Naive thymus-derived CD4-positive, alpha-beta T cell (primary cell): ENCODE measurements at regions of chr3 and their contacts with region 1.

Region 1: DNA sequence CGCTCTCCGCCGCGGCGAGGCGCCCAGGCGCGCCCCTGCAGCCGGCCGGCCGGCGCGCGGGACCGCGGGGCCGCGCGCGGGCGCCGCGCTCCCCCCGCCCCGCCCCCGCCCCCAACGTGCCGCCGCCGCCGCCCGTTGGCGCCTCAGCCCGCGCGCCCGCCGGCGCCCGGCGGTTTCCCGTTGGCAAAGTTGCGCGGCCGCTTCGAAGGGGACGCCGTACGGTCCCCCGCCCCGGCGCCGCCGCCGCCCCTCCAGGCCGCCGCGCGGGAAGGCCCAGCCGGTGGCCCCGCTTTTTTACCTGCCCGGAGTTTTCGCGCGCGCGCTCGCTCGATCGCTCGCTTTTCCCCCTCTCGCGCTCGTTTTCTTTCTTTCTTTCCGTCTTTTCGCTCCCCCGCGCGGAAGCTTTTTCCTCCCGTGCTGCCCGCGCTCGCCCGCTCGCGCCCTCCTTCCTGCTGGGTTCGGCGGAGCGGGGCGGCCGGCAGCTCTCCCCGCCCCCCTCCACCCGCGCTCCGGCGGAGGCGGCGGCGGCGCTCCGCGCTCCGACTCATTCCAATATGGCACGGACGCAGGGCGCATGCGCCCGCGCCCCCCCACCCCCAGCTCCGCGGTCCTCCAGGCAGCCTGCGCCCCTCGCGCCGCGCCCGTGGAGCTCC is at the start of gene SFMBT1:
- DNase-seq: peak in 8 of 9 donors; percentile 53 to 75 (median 72)
- ATAC-seq: peak; percentile 71
- H3K4me3 ChIP-seq: peak within 1 kb of the TSS; percentile 77
- H3K4me3 Mint-ChIP-seq: peak within 1 kb of the TSS; percentile 92 to 100 (median 97)
- H3K27ac ChIP-seq: peak within 1 kb of the TSS; percentile 86
- H3K27ac Mint-ChIP-seq: peak within 1 kb of the TSS; percentile 91 to 100 (median 99)
- H3K4me1 ChIP-seq: peaks cover 9 to 23% of the 10 kb centered on the region in 2 donors
- H3K4me1 Mint-ChIP-seq: peaks cover 17 to 53% (median 42%) of the 10 kb centered on the region in 7 donors
- H3K27me3 ChIP-seq: no peaks in the 10 kb centered on the region
- H3K27me3 Mint-ChIP-seq: peaks cover 0 to 17% (median 0%) of the 10 kb centered on the region in 5 donors
- total RNA-seq, gene SFMBT1: 28.4 to 47.1 (median 39.0) TPM

Region 2: DNA sequence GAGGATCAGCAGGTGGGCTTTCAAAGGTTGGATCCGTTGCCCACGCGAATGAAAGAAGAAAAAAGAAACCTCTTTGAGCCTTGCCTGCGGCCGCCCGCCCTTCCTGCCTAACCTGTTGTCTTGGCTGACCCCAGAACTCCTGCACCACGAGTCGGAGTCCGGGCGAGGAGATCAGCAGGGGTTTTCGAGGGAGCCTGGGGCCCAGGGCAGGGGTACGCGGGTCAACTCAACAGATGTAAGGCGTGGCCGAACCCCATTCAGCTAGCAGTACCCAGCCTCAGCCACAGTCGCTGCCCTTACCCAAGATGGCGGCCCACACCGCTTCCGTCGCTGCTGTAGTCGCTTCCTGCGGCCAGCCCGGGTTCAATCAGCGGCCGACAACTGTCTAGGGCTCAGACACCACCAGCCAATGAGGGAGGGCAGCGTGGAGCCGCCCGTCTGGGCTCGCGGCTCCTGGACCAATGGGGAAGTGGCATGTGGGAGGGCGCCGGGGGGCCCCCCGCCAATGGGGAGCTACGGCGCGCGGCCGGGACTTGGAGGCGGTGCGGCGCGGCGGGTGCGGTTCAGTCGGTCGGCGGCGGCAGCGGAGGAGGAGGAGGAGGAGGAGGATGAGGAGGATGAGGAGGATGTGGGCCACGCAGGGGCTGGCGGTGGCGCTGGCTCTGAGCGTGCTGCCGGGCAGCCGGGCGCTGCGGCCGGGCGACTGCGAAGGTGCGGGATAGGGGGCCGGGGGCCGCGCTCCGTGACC is 1660.7 kb before region 1 on chr3 and contains the start of gene MANF:
- CTCF ChIA-PET with region 1: no interaction called
- POLR2A ChIA-PET with region 1: no interaction called
- intact Hi-C with region 1: loop called in 1 of 2 experiments (anchors 10 kb)
- DNase-seq: peak; percentile 87 to 98 (median 98)
- ATAC-seq: peak; percentile 97
- H3K4me3 ChIP-seq: peak within 1 kb of the TSS; percentile 92
- H3K4me3 Mint-ChIP-seq: peak within 1 kb of the TSS; percentile 89 to 99 (median 98)
- H3K27ac ChIP-seq: peak within 1 kb of the TSS; percentile 98
- H3K27ac Mint-ChIP-seq: peak within 1 kb of the TSS; percentile 98 to 99 (median 99)
- H3K4me1 ChIP-seq: peaks cover 22 to 31% of the 10 kb centered on the region in 2 donors
- H3K4me1 Mint-ChIP-seq: peaks cover 32 to 48% (median 46%) of the 10 kb centered on the region in 7 donors
- H3K27me3 ChIP-seq: no peaks in the 10 kb centered on the region
- H3K27me3 Mint-ChIP-seq: no peaks in the 10 kb centered on the region
- total RNA-seq, gene MANF: 28.2 to 182 (median 68.0) TPM

Region 3: DNA sequence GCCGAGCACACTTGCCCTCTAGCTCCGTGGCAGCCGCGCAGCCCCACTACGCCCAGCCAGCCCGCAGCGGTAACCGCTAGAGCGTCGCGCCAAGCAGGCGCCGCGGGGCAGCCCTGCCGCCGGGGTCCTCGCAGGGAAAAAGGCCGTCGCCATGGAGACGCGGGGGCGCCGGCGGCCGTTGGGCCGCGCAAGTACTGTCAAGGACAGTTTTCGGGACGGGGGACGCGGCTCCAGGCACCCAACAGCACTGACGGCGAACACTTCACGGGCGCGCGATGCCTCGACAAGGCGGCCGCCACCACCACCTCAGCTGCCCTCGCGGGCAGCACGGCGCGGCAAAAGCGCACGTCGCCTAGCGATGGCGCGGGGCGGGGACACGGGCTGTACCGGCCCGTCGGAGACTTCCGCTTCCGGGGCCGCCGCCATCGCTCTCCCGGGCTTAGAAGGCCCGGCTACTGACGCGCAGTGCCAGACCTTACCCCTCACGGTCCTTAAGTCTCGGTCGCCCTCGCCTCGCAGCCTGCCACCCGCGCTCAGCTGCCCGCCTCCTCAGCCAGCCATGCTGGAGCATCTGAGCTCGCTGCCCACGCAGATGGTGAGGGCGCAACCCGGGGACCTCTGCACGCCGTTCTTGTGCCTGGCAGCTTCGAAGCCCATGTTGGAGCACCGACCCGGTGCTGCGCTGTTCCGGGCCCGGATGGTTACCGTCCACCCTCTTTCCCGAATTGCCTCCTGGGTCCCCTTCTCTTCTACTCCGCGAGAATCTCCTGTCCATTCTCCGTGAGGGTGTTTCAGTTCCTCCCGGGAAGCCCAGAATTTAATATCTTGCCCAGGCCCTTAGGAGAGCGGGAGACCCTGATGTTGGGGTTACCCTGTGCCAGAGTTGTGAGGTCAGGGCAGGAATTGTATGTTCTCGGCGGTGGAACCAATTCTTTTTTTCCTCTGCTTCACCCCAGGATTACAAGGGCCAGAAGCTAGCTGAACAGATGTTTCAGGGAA is 339.7 kb before region 1 on chr3 and contains the starts of genes GLT8D1 and SPCS1:
- CTCF ChIA-PET with region 1: no interaction called
- POLR2A ChIA-PET with region 1: no interaction called
- intact Hi-C with region 1: loop called in 1 of 2 experiments (anchors 1 kb)
- DNase-seq: peak; percentile 83 to 96 (median 91)
- ATAC-seq: peak; percentile 94
- H3K4me3 ChIP-seq: peak within 1 kb of the TSS; percentile 97
- H3K4me3 Mint-ChIP-seq: peak within 1 kb of the TSS; percentile 89 to 96 (median 94)
- H3K27ac ChIP-seq: peak within 1 kb of the TSS; percentile 93
- H3K27ac Mint-ChIP-seq: peak within 1 kb of the TSS; percentile 90 to 97 (median 95)
- H3K4me1 ChIP-seq: peaks cover 25 to 33% of the 10 kb centered on the region in 2 donors
- H3K4me1 Mint-ChIP-seq: peaks cover 21 to 46% (median 40%) of the 10 kb centered on the region in 7 donors
- H3K27me3 ChIP-seq: no peaks in the 10 kb centered on the region
- H3K27me3 Mint-ChIP-seq: no peaks in the 10 kb centered on the region
- total RNA-seq, gene GLT8D1: 18.9 to 47.7 (median 45.2) TPM
- total RNA-seq, gene SPCS1: 55.0 to 95.3 (median 78.2) TPM

Region 4: GRCh38 chr3:52851348-52851747 is 194.3 kb before region 1 on chr3:
- CTCF ChIA-PET with region 1: no interaction called
- POLR2A ChIA-PET with region 1: no interaction called
- intact Hi-C with region 1: loop called in 1 of 2 experiments (anchors 1 kb)
- DNase-seq: peak in 5 of 9 donors; percentile 22 to 40 (median 35)
- ATAC-seq: peak; percentile 70
- H3K4me3 ChIP-seq: no peak overlapping the region
- H3K4me3 Mint-ChIP-seq: no peak overlapping the region
- H3K27ac ChIP-seq: no peak overlapping the region
- H3K27ac Mint-ChIP-seq: no peak overlapping the region
- H3K4me1 ChIP-seq: no peaks in the 10 kb centered on the region
- H3K4me1 Mint-ChIP-seq: no peaks in the 10 kb centered on the region
- H3K27me3 ChIP-seq: no peaks in the 10 kb centered on the region
- H3K27me3 Mint-ChIP-seq: no peaks in the 10 kb centered on the region

Region 5: DNA sequence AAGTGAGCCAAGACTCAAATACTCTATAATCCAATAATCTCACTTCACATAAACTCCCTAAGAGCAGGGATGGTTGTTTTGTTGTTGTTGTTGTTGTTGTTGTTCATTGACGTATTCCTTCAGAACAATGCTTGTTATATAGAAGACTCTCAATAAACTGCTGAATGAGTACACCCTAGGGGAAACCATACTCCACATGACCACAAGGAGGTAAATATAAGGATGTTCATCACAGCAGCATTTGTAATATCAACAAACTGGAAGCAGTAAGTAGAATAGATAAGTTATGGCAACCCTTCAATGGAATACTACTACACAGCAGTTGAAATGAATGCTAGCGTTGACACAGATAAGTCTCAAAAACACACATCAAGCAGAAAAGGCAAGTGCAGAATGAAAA is 85.9 kb before region 1 on chr3:
- CTCF ChIA-PET with region 1: no interaction called
- POLR2A ChIA-PET with region 1: interaction called, 7 read pairs
- intact Hi-C with region 1: loop called in 1 of 2 experiments (anchors 1 kb)
- DNase-seq: peak in 2 of 9 donors; percentile 4 to 21
- ATAC-seq: no peak
- H3K4me3 ChIP-seq: no peak overlapping the region
- H3K4me3 Mint-ChIP-seq: no peak overlapping the region
- H3K27ac ChIP-seq: no peak overlapping the region
- H3K27ac Mint-ChIP-seq: peak overlapping the region in 1 of 9 donors; percentile 16
- H3K4me1 ChIP-seq: no peaks in the 10 kb centered on the region
- H3K4me1 Mint-ChIP-seq: peaks cover 11 to 44% (median 36%) of the 10 kb centered on the region in 7 donors
- H3K27me3 ChIP-seq: no peaks in the 10 kb centered on the region
- H3K27me3 Mint-ChIP-seq: no peaks in the 10 kb centered on the region

Region 6: GRCh38 chr3:52990637-52991036 is 55.0 kb before region 1 on chr3:
- CTCF ChIA-PET with region 1: interaction called, 3 read pairs
- POLR2A ChIA-PET with region 1: interaction called, 79 read pairs
- intact Hi-C with region 1: loop called in 1 of 2 experiments (anchors 2 kb)
- DNase-seq: no peak
- ATAC-seq: no peak
- H3K4me3 ChIP-seq: no peak overlapping the region
- H3K4me3 Mint-ChIP-seq: no peak overlapping the region
- H3K27ac ChIP-seq: no peak overlapping the region
- H3K27ac Mint-ChIP-seq: peak overlapping the region in 1 of 9 donors; percentile 17
- H3K4me1 ChIP-seq: no peaks in the 10 kb centered on the region
- H3K4me1 Mint-ChIP-seq: peaks cover 17 to 67% (median 47%) of the 10 kb centered on the region in 7 donors
- H3K27me3 ChIP-seq: no peaks in the 10 kb centered on the region
- H3K27me3 Mint-ChIP-seq: no peaks in the 10 kb centered on the region